OCI-LY7 (cell line): ENCODE measurements at regions of chr3 and their contacts with region 1.

Region 1: DNA sequence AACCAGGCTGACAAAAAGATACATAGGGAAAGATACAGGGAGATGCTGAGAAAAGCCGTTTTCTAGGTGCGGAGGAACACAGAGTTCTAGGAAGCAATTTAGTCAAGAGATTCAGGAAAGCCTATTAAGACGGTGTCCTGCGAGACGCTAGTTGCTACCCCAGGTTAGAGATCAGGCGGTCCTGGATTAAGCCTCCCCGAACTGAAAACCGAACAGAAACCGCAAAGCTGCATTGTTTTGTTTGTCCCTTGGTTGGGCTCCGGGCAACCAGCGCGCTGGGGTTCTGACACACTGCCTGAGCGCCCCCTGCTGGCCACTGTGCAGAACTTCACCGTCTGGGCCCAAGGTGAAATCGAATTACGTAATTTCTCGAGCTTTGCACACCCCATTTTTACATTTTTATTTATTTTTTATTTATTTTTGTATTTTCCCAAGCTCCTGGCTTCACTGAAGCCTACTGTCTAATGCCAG is 37.3 kb upstream of the NDUFB4 start:
- DNase-seq: peak; percentile 84
- H3K4me3 ChIP-seq: peak overlapping the region; percentile 64
- H3K27ac ChIP-seq: no peak overlapping the region
- H3K4me1 ChIP-seq: peaks cover 3% of the 10 kb centered on the region
- CTCF ChIP-seq: peak; percentile 94

Region 2: GRCh38 chr3:120245386-120245785 is 313.4 kb before region 1 on chr3:
- CTCF ChIA-PET with region 1: no interaction called
- POLR2A ChIA-PET with region 1: no interaction called
- intact Hi-C with region 1: loop called (anchors 1 kb)
- DNase-seq: no peak
- H3K4me3 ChIP-seq: no peak overlapping the region
- H3K27ac ChIP-seq: no peak overlapping the region
- H3K4me1 ChIP-seq: no peaks in the 10 kb centered on the region
- CTCF ChIP-seq: no peak

Region 3: DNA sequence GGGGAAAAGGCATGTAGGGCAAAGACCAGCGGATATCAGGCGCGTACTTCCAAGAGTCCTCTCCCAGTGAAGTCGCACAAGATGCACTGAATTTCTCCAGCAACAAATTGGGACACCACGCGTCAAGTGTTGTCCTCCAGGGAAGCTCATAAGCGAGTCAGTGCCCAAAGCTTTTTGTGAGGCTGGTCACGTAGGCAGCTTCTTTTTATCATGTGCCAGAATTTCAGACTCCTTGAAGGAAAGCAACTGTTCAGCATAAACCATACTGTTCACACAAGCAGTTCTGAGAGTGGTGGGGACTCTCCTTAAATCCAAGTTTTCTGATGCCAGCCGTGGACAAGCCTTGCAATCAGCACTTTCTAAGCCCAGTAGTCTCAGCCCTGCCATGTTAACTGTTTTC is 97.9 kb before region 1 on chr3:
- CTCF ChIA-PET with region 1: no interaction called
- POLR2A ChIA-PET with region 1: no interaction called
- intact Hi-C with region 1: no loop called
- DNase-seq: no peak
- H3K4me3 ChIP-seq: no peak overlapping the region
- H3K27ac ChIP-seq: no peak overlapping the region
- H3K4me1 ChIP-seq: no peaks in the 10 kb centered on the region
- CTCF ChIP-seq: no peak

Region 4: GRCh38 chr3:120708408-120708807 is 149.6 kb after region 1 on chr3:
- CTCF ChIA-PET with region 1: no interaction called
- POLR2A ChIA-PET with region 1: no interaction called
- intact Hi-C with region 1: no loop called
- DNase-seq: peak; percentile 6
- H3K4me3 ChIP-seq: no peak overlapping the region
- H3K27ac ChIP-seq: no peak overlapping the region
- H3K4me1 ChIP-seq: peaks cover 15% of the 10 kb centered on the region
- CTCF ChIP-seq: no peak